ENCODE measurements at regions of chr21 and their contacts with region 1.

Region 1: DNA sequence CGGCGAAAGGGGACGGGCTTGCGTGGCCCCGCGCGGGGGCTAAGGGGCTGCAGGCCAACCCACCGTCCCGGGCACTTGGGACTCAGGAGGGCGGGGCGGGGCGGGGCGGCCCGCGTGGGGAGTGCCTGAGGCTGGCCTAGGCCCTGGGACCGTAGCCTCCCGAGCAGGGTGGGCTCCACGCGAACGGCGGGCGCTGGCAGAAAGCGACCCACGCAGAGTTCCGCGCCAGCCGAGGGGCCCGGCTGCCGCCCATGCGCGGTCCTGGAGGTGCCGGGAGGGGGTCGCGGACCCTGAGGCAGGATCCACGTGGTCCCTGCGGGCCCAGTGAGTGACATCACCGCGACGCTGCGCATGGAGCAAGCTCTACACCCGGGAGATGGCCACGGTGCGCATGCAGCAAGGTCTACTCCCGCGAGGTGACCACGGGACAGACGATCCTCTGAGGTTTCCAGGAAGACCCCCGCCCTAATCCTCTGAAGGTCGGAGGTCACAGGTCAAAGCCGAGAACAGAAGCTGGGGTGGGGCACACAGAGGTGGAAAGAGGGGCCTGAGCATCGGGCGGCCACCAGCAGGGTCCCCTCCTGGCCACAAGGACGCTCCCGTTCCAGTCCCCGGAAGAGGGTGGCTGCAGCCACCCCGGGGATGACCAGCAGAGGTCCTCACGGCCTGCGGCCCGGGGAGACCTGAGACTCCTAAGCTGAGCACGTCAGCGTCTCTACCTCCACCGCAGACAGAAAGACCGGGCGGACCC is 13.5 kb upstream of the SLC19A1 start:
- DNase-seq: peak; percentile 91 to 92
- ATAC-seq: peak; percentile 84 to 93
- H3K4me3 ChIP-seq: peak overlapping the region; percentile 56
- H3K27ac ChIP-seq: peak overlapping the region; percentile 87 to 95
- H3K4me1 ChIP-seq: peaks cover 18% of the 10 kb centered on the region
- CTCF ChIP-seq: peak; percentile 73
- EP300 ChIP-seq: no peak
- POLR2A ChIP-seq: peak; percentile 18; the same call in 1 of the 2 replicates
- RAD21 ChIP-seq: peak; percentile 70 to 77

Region 2: GRCh38 chr21:45568383-45568782 is 12.7 kb after region 1 on chr21:
- CTCF ChIA-PET with region 1: interaction called, 10 read pairs
- POLR2A ChIA-PET with region 1: interaction called, 3 read pairs
- DNase-seq: no peak
- ATAC-seq: no peak
- H3K4me3 ChIP-seq: no peak overlapping the region
- H3K27ac ChIP-seq: no peak overlapping the region
- H3K4me1 ChIP-seq: no peaks in the 10 kb centered on the region
- CTCF ChIP-seq: no peak
- EP300 ChIP-seq: no peak
- POLR2A ChIP-seq: no peak
- RAD21 ChIP-seq: no peak

Region 3: DNA sequence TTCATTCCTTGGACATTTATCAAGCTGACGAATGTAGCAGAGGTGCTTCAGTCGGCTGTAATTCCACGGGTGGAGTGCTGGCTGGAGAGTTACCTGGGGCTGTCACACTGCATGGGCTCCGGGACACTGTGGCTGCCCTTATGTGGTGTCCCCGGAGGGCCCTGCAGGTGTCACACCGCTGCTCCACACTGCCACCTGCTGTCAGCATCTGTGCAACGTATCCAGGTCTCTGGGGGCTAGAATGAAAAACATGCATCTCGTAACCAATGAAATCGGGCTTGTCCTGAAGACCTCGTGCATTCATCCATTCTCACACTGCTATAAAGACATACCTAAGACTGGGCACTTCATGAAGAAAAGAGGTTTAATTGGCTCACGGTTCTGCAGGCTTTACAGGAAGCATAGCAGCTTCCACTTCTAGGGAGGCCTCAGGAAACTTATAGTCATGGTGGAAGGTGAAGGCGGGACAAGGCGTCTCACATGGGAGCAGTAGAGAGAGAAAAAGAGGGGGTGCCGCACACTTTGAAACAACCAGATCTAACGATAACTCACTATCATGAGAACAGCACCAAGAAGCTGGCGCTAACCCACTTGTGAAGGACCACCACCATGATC is 41.1 kb after region 1 on chr21:
- CTCF ChIA-PET with region 1: interaction called, 49 read pairs
- POLR2A ChIA-PET with region 1: interaction called, 4 read pairs
- DNase-seq: peak; percentile 53 to 74
- ATAC-seq: peak; percentile 85 to 95
- H3K4me3 ChIP-seq: no peak overlapping the region
- H3K27ac ChIP-seq: no peak overlapping the region
- H3K4me1 ChIP-seq: no peaks in the 10 kb centered on the region
- CTCF ChIP-seq: peak; percentile 66
- EP300 ChIP-seq: no peak
- POLR2A ChIP-seq: no peak
- RAD21 ChIP-seq: peak; percentile 55 to 64

Region 4: GRCh38 chr21:45709173-45709572 is 153.4 kb after region 1 on chr21:
- CTCF ChIA-PET with region 1: no interaction called
- POLR2A ChIA-PET with region 1: no interaction called
- DNase-seq: no peak
- ATAC-seq: no peak
- H3K4me3 ChIP-seq: no peak overlapping the region
- H3K27ac ChIP-seq: no peak overlapping the region
- H3K4me1 ChIP-seq: no peaks in the 10 kb centered on the region
- CTCF ChIP-seq: no peak
- EP300 ChIP-seq: no peak
- POLR2A ChIP-seq: no peak
- RAD21 ChIP-seq: no peak

Region 5: GRCh38 chr21:45820171-45821091 is 264.7 kb after region 1 on chr21:
- CTCF ChIA-PET with region 1: interaction called, 53 read pairs
- POLR2A ChIA-PET with region 1: interaction called, 9 read pairs
- DNase-seq: peak; percentile 78 to 82
- ATAC-seq: peak; percentile 82 to 93
- H3K4me3 ChIP-seq: no peak overlapping the region
- H3K27ac ChIP-seq: peak overlapping the region in 1 of 2 experiments; percentile 70; a peak in 3 of 6 replicates
- H3K4me1 ChIP-seq: peaks cover 28% of the 10 kb centered on the region
- CTCF ChIP-seq: peak; percentile 69
- EP300 ChIP-seq: no peak
- POLR2A ChIP-seq: no peak
- RAD21 ChIP-seq: peak; percentile 87 to 90

Measured in A549 (cell line).